K562 (cell line): ENCODE measurements at regions of chr13 and their contacts with region 1.

Region 1: GRCh38 chr13:51959773-51960172 is 51.5 kb downstream of the ATP7B start:
- DNase-seq: peak; percentile 21 to 37 (median 32)
- ATAC-seq: peak; percentile 69
- H3K4me3 ChIP-seq: no peak overlapping the region
- H3K27ac ChIP-seq: no peak overlapping the region; the same call in 2 of the 3 replicates
- H3K4me1 ChIP-seq: peaks cover 31 to 50% of the 10 kb centered on the region in 2 experiments
- H3K27me3 ChIP-seq: no peaks in the 10 kb centered on the region
- CTCF ChIP-seq: no peak
- EP300 ChIP-seq: no peak
- POLR2A ChIP-seq: no peak
- RAD21 ChIP-seq: no peak

Region 2: DNA sequence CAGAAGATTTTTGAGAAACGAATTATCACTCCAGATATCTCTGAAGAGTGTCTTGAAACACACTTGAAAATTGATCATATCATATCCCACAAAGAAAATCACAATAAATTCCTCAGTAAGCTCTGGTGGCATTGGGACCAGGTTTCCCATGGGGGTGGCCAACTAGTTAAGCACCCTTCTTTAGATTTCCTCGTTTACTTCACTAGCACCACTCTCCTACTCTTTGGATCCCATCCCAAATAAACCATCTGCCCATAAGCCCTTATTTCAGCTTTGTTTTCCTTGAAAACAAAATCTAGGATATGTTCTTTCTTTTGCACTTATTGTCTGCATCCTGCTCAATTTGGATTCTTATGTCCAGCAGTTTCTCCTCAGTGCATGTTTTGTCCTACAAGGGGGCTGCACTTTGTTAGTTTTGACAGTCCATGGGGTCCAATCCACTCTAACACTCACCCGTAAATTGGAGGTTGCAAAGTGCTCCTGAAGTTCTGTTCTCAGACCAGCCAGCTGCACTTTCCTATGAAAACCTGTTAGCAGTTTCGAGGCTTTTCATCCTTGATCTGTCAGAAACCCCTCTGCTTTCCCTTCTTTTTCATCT is 777.9 kb before region 1 on chr13:
- CTCF ChIA-PET with region 1: no interaction called
- POLR2A ChIA-PET with region 1: no interaction called
- in situ Hi-C with region 1: no loop called
- intact Hi-C with region 1: no loop called
- DNase-seq: no peak
- ATAC-seq: no peak
- H3K4me3 ChIP-seq: no peak overlapping the region
- H3K27ac ChIP-seq: no peak overlapping the region
- H3K4me1 ChIP-seq: no peaks in the 10 kb centered on the region
- H3K27me3 ChIP-seq: no peaks in the 10 kb centered on the region
- CTCF ChIP-seq: no peak
- EP300 ChIP-seq: no peak
- POLR2A ChIP-seq: no peak
- RAD21 ChIP-seq: no peak

Region 3: GRCh38 chr13:51895906-51896888 is 63.6 kb before region 1 on chr13:
- CTCF ChIA-PET with region 1: no interaction called
- POLR2A ChIA-PET with region 1: no interaction called
- in situ Hi-C with region 1: no loop called
- intact Hi-C with region 1: loop called (anchors 2 kb)
- DNase-seq: peak; percentile 48 to 68 (median 55)
- ATAC-seq: peak; percentile 98
- H3K4me3 ChIP-seq: no peak overlapping the region
- H3K27ac ChIP-seq: no peak overlapping the region
- H3K4me1 ChIP-seq: no peaks in the 10 kb centered on the region; a peak in 2 of 5 replicates
- H3K27me3 ChIP-seq: no peaks in the 10 kb centered on the region
- CTCF ChIP-seq: peak; percentile 77 to 88 (median 78)
- EP300 ChIP-seq: no peak
- POLR2A ChIP-seq: no peak
- RAD21 ChIP-seq: peak; percentile 85 to 87

Region 4: DNA sequence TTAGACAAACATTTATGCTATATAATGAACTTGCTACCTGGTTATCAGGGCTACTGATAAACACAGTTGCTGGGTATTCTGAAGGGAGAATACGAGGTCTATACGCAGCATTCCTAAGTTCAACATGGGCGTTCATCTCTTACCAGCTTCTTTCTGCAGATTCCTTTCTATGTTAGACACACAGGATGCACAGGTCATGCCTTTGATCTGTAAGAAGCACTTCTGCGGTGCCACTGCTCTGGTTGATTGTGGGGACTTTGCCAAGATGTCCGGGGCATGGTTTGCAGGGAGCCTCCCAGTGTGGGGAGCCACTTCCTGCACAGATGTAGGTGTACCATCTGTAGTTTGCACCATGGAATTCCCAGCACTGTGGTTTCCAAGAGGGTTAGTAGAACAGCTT is 10.6 kb after region 1 on chr13:
- CTCF ChIA-PET with region 1: no interaction called
- POLR2A ChIA-PET with region 1: interaction called, 13 read pairs
- in situ Hi-C with region 1: no loop called
- intact Hi-C with region 1: no loop called
- DNase-seq: no peak
- ATAC-seq: no peak
- H3K4me3 ChIP-seq: no peak overlapping the region
- H3K27ac ChIP-seq: no peak overlapping the region
- H3K4me1 ChIP-seq: peaks cover 18% of the 10 kb centered on the region in 2 experiments
- H3K27me3 ChIP-seq: no peaks in the 10 kb centered on the region
- CTCF ChIP-seq: no peak
- EP300 ChIP-seq: no peak
- POLR2A ChIP-seq: no peak
- RAD21 ChIP-seq: no peak

Region 5: GRCh38 chr13:51995677-51996551 is 36.1 kb after region 1 on chr13:
- CTCF ChIA-PET with region 1: no interaction called
- POLR2A ChIA-PET with region 1: interaction called, 5 read pairs
- in situ Hi-C with region 1: no loop called
- intact Hi-C with region 1: loop called (anchors 5 kb)
- DNase-seq: peak; percentile 33 to 51 (median 38)
- ATAC-seq: peak; percentile 50
- H3K4me3 ChIP-seq: peak overlapping the region; percentile 29; the same call in 1 of the 2 replicates
- H3K27ac ChIP-seq: peak overlapping the region; percentile 72
- H3K4me1 ChIP-seq: peaks cover 44 to 59% of the 10 kb centered on the region in 2 experiments
- H3K27me3 ChIP-seq: no peaks in the 10 kb centered on the region
- CTCF ChIP-seq: peak; percentile 9 to 33 (median 31); a peak in 3 of 6 replicates
- EP300 ChIP-seq: no peak
- POLR2A ChIP-seq: no peak
- RAD21 ChIP-seq: no peak